HepG2 (cell line): ENCODE measurements at regions of chr17 and their contacts with region 1.

Region 1: DNA sequence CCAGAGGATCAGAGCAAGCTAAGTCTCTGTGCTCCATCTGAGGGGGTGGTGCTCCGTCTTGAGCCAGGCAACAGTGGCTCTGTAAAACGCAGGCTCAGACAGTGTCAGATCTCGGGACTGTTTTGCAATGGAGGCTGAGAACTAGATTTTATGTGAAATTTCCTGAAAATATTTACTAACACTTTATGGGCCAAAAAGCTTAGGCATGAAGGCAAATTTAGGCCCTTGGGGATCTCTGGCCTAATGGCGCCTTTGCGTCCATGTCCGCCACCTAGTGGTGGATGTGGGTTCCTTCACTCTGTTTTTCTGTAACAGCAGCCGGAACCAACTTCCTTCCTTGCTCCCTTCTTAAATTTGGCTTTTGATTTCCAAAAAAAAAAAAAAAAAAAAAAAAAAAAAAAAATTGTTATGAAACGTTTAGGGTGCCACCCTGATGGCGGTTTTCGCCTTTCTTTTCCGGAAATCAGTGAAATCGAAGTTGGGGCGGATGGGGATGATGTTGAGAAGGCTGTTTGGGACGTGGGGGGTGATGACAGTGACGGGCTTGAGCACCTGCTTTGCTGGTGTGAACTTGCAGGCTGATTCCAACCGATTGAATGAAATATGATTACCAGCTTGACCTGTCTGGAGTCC is 14.0 kb upstream of the ELAC2 start:
- DNase-seq: peak; percentile 10
- ATAC-seq: peak; percentile 62; the same call in 2 of the 3 replicates
- H3K4me3 ChIP-seq: no peak overlapping the region
- H3K27ac ChIP-seq: no peak overlapping the region
- H3K4me1 ChIP-seq: 0 out of 2 replicates have a peak, but pooled peaks cover 5% of the 10 kb centered on the region
- H3K27me3 ChIP-seq: peaks cover 0 to 5% of the 10 kb centered on the region in 2 experiments; a peak in 1 of 5 replicates
- CTCF ChIP-seq: peak; percentile 65
- EP300 ChIP-seq: no peak
- POLR2A ChIP-seq: no peak
- RAD21 ChIP-seq: no peak

Region 2: GRCh38 chr17:12983991-12984884 is 47.6 kb before region 1 on chr17:
- CTCF ChIA-PET with region 1: no interaction called
- POLR2A ChIA-PET with region 1: no interaction called
- in situ Hi-C with region 1: no loop called
- intact Hi-C with region 1: no loop called
- DNase-seq: no peak
- ATAC-seq: peak; percentile 57
- H3K4me3 ChIP-seq: no peak overlapping the region
- H3K27ac ChIP-seq: no peak overlapping the region
- H3K4me1 ChIP-seq: peaks cover 4% of the 10 kb centered on the region; the same call in 1 of the 2 replicates
- H3K27me3 ChIP-seq: no peaks in the 10 kb centered on the region
- CTCF ChIP-seq: no peak
- EP300 ChIP-seq: no peak
- POLR2A ChIP-seq: no peak
- RAD21 ChIP-seq: no peak

Region 3: DNA sequence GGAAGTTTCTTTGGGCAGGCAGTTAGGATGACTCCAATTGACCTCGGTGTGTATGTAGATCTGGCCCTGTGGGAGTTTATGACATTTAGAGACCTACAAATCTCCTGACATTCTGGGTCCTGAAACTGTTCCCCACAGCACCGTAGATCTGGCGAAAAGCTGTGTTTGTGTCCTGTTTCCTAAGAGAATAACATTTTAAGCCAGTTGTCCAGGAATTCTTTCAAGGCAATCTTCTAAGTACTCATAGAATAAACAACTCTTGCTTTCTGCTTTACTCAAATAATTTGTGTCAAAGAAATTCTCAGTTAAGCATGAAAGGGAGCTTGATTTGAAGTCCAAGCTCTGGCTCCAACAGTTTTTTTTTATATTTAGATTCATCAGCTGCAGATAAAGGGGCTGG is 64.5 kb after region 1 on chr17:
- CTCF ChIA-PET with region 1: no interaction called
- POLR2A ChIA-PET with region 1: no interaction called
- in situ Hi-C with region 1: no loop called
- intact Hi-C with region 1: loop called (anchors 10 kb)
- DNase-seq: no peak
- ATAC-seq: no peak
- H3K4me3 ChIP-seq: no peak overlapping the region
- H3K27ac ChIP-seq: no peak overlapping the region
- H3K4me1 ChIP-seq: 0 out of 2 replicates have a peak, but pooled peaks cover 5% of the 10 kb centered on the region
- H3K27me3 ChIP-seq: no peaks in the 10 kb centered on the region; a peak in 1 of 5 replicates
- CTCF ChIP-seq: no peak
- EP300 ChIP-seq: no peak
- POLR2A ChIP-seq: no peak
- RAD21 ChIP-seq: no peak